ENCODE measurements at regions of chr1 and their contacts with region 1.

Region 1: DNA sequence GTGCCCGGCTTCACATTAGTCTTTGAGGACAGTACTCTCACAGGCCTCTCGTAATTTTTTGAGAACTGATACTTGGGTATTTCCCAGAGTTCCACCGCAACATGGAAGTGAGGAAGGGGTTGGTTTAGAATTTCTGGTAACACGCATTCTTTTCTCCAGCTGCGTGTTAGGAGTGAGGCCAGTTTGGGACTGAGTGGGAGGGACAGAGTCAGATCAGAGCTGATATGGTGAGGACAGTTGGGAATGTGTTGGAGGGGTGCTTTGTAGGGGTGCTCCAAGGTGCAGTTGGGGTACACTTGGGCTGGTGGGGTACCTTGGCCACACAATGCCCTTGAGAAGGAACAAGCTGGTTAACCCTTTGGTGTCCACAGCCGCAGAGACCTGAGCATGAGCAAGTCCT is 6.7 kb downstream of the FBXO6 start:
- DNase-seq: no peak
- H3K4me3 Mint-ChIP-seq: no peak overlapping the region
- H3K27ac Mint-ChIP-seq: no peak overlapping the region
- H3K4me1 Mint-ChIP-seq: peaks cover 9% of the 10 kb centered on the region
- H3K27me3 Mint-ChIP-seq: no peaks in the 10 kb centered on the region

Region 2: GRCh38 chr1:11681071-11681771 is 10.5 kb after region 1 on chr1 and contains the start of gene MAD2L2:
- CTCF ChIA-PET with region 1: interaction called, 13 read pairs
- DNase-seq: peak; percentile 93
- H3K4me3 Mint-ChIP-seq: peak within 1 kb of the TSS; percentile 87
- H3K27ac Mint-ChIP-seq: peak within 1 kb of the TSS; percentile 93
- H3K4me1 Mint-ChIP-seq: peaks cover 21% of the 10 kb centered on the region
- H3K27me3 Mint-ChIP-seq: peaks cover 46% of the 10 kb centered on the region

Region 3: DNA sequence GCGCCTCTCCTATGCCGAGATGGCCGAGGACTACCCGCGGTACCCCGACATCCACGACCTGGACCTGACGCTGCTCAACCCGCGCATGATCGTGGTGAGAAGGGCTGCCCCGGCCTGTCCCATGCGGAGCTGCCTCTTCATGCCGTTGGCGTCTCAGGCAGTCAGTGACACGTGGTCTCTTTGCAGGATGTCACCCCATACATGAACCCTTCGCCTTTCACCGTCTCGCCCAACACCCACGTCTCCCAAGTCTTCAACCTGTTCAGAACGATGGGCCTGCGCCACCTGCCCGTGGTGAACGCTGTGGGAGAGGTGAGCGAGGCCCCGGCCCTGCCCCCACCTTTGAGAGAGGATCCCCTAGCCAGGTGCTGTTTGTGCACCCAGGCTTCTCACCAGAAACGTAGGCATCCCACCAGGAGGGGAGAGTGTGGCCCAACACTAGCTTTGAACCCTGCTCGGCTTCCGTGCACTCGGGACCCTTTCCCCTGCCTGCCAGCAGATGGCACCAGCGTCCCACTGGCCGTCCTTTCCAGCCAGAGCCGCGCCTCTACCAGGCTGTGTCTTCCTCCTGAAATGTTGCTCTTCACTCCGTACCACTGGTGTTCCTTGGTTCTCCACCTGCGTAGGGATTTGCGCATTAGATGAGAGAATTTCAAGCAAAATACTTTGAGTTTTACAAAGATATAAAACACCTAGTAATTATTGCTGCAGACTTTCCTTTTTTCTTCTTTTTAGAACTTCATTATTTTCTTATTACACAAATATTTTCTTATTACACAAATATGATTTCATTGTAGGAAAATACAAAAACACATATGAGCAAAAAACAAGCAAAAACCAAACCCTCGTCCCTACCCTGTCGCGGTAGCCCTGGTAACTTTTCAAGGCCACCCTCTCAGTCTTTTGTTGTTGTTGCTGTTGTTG is 167.9 kb after region 1 on chr1:
- CTCF ChIA-PET with region 1: no interaction called
- DNase-seq: peak; percentile 82
- H3K4me3 Mint-ChIP-seq: no peak overlapping the region
- H3K27ac Mint-ChIP-seq: no peak overlapping the region
- H3K4me1 Mint-ChIP-seq: peaks cover 3% of the 10 kb centered on the region
- H3K27me3 Mint-ChIP-seq: no peaks in the 10 kb centered on the region